Right lobe of liver (tissue), 6 donors: ENCODE measurements at regions of chr2 and their contacts with region 1.

Region 1: DNA sequence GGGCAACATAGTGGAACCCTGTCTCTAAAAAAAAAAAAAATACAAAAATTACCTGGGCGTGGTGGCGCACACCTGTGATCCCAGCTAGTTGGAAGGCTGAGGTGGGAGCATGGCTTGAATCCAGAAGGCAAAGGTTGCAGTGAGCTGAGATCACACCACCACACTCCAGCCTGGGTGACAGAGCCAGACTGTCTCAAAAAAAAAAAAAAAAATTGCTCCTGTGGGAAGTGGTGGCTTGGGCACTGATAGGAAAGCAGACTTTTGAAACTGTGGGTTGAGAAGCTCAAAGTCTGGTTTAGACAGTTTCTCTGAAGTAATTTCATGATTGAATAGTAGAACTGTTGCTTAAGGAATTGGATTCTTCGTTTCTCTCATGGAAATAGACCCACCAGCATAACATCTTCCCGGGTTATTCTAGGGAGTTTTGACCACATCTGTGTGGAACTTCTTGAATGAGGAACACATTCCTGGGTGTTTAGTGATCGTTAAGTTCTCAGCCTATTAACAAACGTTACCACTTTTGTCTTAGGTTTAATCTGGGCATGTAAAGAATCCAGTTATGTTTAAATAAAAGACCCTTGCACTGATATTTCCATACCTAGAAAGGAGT is 33.5 kb downstream of the GRHL1 start:
- DNase-seq: no peak
- ATAC-seq: peak; percentile 66 to 75 (median 72)
- H3K4me3 ChIP-seq: no peak overlapping the region
- H3K27ac ChIP-seq: peak overlapping the region in 2 of 3 donors; percentile 11 to 36
- H3K4me1 ChIP-seq: peaks cover 0 to 10% (median 5%) of the 10 kb centered on the region in 4 donors
- H3K27me3 ChIP-seq: no peaks in the 10 kb centered on the region
- CTCF ChIP-seq: no peak
- POLR2A ChIP-seq: no peak

Region 2: GRCh38 chr2:10048501-10049171 is 63.7 kb after region 1 on chr2:
- intact Hi-C with region 1: loop called (anchors 5 kb)
- DNase-seq: peak in 1 of 3 donors; percentile 54
- ATAC-seq: peak in 1 of 4 donors; percentile 17
- H3K4me3 ChIP-seq: peak overlapping the region in 1 of 3 donors; percentile 85
- H3K27ac ChIP-seq: peak overlapping the region in 1 of 3 donors; percentile 94
- H3K4me1 ChIP-seq: peaks cover 0 to 45% (median 13%) of the 10 kb centered on the region in 4 donors
- H3K27me3 ChIP-seq: no peaks in the 10 kb centered on the region
- CTCF ChIP-seq: peak; percentile 39 to 66 (median 56)
- POLR2A ChIP-seq: no peak